ENCODE measurements at regions of chr18 and their contacts with region 1.

Region 1: DNA sequence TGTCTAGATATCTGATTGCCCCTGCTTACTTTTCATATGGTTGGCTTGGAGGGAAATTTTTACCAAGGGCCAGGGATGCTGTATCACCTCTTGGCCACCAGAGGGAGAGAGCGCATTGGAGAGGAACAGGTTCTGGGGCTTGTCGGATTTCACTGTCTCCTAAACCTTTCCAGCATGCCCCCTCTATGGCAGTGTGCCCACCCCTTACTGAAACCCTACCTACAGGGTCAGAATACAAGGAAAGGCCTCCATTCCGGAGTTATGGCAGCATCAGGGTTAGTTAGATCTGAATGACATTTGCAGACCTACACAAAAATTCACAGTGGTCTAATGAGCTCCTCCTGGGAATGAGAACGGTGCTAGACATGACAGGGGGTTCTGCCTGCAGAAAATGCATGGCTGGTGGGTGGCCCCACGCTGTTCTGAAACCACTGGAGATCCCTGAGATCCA is 5.8 kb downstream of the SLC14A2 start:
- DNase-seq: peak; percentile 58
- ATAC-seq: peak; percentile 63
- H3K4me3 ChIP-seq: no peak overlapping the region
- H3K4me3 Mint-ChIP-seq: no peak overlapping the region
- H3K27ac ChIP-seq: no peak overlapping the region
- H3K27ac Mint-ChIP-seq: no peak overlapping the region
- H3K4me1 ChIP-seq: no peaks in the 10 kb centered on the region
- H3K4me1 Mint-ChIP-seq: peaks cover 1% of the 10 kb centered on the region
- H3K27me3 ChIP-seq: peaks cover 0 to 2% (median 0%) of the 10 kb centered on the region in 4 experiments
- H3K27me3 Mint-ChIP-seq: peaks cover 19% of the 10 kb centered on the region
- CTCF ChIP-seq: peak; percentile 99

Region 2: GRCh38 chr18:45910405-45911023 is 289.4 kb after region 1 on chr18:
- CTCF ChIA-PET with region 1: interaction called, 3 read pairs
- POLR2A ChIA-PET with region 1: no interaction called
- intact Hi-C with region 1: loop called (anchors 1 kb)
- DNase-seq: peak; percentile 57
- ATAC-seq: peak; percentile 33
- H3K4me3 ChIP-seq: no peak overlapping the region
- H3K4me3 Mint-ChIP-seq: no peak overlapping the region
- H3K27ac ChIP-seq: no peak overlapping the region
- H3K27ac Mint-ChIP-seq: no peak overlapping the region
- H3K4me1 ChIP-seq: no peaks in the 10 kb centered on the region
- H3K4me1 Mint-ChIP-seq: no peaks in the 10 kb centered on the region
- H3K27me3 ChIP-seq: no peaks in the 10 kb centered on the region
- H3K27me3 Mint-ChIP-seq: no peaks in the 10 kb centered on the region
- CTCF ChIP-seq: peak; percentile 71

Measured in B cell (primary cell).